ENCODE measurements at regions of chr2 and their contacts with region 1.

Region 1: DNA sequence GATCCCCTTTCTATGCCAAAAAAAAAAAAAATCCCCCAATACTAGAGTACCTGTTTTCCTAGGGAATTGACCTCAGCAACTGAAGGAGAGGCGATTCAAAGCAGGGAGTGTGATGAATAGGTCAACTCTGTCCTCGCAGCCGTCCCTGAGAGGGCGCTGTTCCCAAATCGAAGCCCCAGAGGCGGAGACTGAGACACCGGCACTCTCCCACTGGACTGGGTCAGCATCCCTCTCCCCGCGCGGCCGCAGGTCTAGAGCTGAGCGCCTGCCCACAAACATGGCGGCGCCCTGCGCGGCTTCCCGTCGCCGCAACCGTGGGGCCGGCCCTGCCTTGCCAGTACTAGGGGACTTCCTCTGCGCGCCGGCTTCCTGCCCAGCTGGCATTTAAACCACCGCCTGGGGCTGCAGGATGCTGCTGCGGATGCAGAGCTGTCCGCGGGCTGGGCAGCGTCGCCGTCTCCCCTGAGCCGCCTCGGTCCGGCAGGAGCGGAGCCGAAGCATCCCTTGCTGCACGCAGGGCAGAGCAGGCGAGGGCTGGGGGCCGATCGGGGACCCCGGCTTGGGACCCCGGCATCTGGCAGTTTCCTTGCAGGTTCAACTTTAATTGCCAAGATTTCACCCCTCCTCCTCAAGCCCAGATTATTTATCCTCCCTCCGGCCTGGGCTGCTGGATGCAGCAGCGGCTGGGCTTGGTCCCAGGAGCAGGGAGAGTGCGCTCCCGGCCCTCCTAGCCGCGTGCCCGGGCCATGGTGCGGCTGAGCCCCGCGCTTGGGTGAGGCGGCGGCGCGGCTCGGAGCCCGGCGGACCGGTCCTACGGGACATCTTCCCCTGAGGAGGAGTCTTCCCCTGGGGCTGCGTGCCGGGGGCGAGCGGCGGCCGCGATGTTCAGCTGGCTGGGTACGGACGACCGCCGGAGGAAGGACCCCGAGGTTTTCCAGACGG is at the start of gene EHD3:
- DNase-seq: peak; percentile 69
- H3K4me3 ChIP-seq: peak within 1 kb of the TSS; percentile 59
- CTCF ChIP-seq: peak; percentile 68

Region 2: DNA sequence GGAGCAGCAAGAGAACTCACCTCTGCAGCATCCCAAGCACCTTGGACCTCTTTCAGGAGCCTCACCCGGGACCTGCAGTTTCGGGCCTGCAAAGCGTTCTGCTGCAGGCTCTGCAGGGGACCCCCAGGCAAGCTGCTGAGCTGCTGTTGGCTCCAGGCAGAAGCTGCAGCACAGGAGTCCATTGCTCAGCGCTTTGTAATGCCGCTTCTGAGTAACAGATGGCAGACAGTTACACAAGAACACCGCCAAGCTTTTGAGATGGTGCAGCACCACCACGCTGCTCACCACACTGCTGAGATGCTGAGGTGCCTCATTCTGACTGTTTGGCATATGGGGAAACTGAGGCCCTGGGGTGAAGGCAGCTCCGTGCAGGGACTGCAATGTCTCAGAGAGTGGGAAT is 93.9 kb before region 1 on chr2:
- in situ Hi-C with region 1: loop called (anchors 5 kb)
- DNase-seq: no peak
- H3K4me3 ChIP-seq: no peak overlapping the region
- CTCF ChIP-seq: no peak

Measured in astrocyte of the cerebellum (primary cell).